OCI-LY7 (cell line): ENCODE measurements at regions of chr16 and their contacts with region 1.

Region 1: DNA sequence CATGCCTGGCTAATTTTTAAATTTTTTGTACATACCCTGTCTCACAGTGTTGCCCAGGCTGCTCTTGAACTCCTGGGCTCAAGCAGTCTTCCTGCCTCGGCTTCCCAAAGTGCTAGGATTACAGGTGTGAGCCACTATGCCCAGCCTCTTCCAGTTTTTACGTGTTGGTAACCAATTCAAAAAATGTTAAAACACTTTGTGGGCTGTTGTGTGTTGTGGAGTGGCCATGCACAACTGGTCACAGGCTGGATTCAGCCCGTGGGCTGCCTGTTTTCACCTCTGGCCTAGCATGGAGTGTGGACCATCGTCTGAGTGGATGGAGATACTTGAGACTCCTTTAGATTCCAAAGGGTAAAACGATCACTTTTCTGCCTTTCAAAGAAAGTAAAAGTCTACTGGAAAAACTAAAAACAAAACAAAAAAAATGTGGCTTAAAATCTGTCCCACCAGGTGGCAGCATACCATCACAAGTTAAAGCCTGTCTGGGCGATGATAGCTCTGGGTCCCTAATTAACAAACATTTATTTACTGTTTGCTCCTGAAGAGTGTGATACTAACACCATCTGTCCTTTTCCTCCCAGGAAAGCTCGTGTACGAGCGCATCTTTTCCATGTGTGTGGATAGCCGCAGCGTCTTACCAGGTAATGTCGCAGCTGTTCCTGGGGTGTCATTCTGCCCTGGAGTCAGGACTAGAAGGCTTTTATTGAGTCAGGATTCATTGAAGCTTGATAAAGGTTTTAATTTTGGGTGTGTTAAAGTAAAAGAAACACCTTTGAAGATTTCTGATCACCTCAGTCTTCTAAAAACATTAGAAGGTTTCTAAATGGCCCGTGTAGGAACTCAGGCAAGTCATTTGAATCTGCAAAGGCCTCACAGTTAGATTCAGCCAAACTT is 45.8 kb downstream of the VPS35L start:
- DNase-seq: peak; percentile 24
- H3K4me3 ChIP-seq: no peak overlapping the region
- H3K27ac ChIP-seq: no peak overlapping the region
- H3K4me1 ChIP-seq: no peaks in the 10 kb centered on the region
- CTCF ChIP-seq: peak; percentile 86

Region 2: DNA sequence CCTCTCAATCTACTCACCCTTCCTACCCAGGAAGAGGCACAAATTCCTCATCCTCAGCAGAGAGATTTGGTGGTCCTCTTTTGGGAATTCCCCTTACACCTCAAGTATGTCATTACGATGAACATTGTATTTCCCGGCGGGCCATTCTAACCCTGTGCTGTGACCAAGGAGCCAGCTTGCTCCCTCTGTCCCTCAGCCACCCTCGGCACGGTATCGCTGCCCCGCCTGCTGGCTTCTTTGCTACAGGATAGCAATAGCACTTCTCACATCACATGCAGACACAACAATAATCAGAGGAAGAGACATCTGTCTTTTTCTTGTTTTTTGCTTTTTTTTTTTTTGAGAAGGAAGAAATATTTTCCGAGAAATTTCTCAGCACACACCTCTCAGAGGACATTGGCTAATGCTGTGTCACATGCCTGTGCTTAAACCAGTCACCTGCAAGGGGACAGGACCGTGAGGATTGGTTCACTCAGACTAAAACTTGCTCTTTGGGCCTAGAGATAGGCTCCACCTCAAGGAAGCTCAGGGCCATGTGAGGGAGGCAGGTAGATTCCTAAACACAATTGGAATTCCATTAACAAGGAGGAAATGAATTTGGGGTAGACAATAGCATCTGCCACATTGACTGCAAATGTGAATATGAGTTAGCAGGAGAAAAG is 142.5 kb before region 1 on chr16:
- CTCF ChIA-PET with region 1: no interaction called
- POLR2A ChIA-PET with region 1: no interaction called
- intact Hi-C with region 1: no loop called
- DNase-seq: no peak
- H3K4me3 ChIP-seq: no peak overlapping the region
- H3K27ac ChIP-seq: no peak overlapping the region
- H3K4me1 ChIP-seq: no peaks in the 10 kb centered on the region
- CTCF ChIP-seq: no peak

Region 3: GRCh38 chr16:19574615-19575014 is 26.7 kb before region 1 on chr16:
- CTCF ChIA-PET with region 1: no interaction called
- POLR2A ChIA-PET with region 1: no interaction called
- intact Hi-C with region 1: no loop called
- DNase-seq: no peak
- H3K4me3 ChIP-seq: no peak overlapping the region
- H3K27ac ChIP-seq: no peak overlapping the region
- H3K4me1 ChIP-seq: no peaks in the 10 kb centered on the region
- CTCF ChIP-seq: no peak

Region 4: DNA sequence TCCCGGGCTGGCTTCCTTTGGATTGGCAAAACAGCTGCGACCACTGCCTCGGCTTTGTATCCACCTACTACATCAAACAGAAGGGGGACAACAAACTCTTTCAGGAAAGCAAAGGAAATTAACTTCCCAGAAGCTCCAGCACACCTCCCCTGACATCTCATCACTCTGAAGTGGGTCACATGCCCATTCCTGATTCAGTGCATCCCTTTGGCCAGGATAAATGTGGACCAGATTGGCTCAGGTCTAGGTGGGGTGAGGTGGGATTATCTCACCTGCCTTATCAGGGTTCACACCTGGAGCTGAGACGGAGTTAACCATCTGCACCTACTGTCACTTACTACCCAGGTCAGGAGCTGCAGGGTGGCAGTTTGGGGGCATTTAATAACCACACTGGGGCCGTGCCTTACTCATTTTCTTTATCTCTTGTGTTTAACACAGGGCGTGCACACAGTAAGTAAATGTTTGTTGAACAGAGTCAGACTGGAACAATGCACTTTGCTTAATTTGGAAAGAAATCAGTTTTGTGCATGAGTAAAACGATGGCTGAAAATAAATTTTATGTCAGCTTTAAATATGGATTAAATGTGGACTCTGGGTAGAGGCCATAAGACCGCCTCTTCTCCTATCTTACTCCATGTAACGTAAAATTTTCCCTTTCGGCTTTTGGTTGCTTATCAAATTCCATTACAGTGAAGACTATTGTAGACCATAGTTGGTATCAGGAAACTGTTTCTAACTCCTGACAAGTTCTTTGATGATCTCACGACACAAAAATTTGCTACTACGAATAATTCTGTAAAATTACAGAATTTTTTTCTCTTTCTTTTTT is 152.7 kb after region 1 on chr16:
- CTCF ChIA-PET with region 1: no interaction called
- POLR2A ChIA-PET with region 1: no interaction called
- intact Hi-C with region 1: no loop called
- DNase-seq: no peak
- H3K4me3 ChIP-seq: no peak overlapping the region
- H3K27ac ChIP-seq: no peak overlapping the region
- H3K4me1 ChIP-seq: no peaks in the 10 kb centered on the region
- CTCF ChIP-seq: no peak

Region 5: DNA sequence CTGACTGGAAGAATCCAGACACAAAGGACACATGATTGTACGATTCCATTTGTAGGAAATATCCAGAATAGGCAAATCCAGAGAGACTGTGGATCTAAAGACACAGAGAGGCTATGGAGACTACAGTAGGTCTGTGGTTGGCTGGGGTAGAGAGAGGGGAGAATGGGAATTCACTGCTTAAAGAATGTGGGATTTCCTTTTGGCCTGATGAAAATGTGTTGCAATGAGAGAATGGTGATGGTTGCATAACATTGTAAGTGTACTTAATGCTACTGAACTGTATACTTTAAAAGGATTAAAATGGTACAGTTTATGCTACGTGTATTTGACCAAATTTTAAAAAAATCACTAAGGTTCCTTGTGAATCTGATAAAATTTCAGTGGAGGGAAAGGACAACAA is 221.2 kb after region 1 on chr16:
- CTCF ChIA-PET with region 1: no interaction called
- POLR2A ChIA-PET with region 1: no interaction called
- intact Hi-C with region 1: no loop called
- DNase-seq: no peak
- H3K4me3 ChIP-seq: no peak overlapping the region
- H3K27ac ChIP-seq: no peak overlapping the region
- H3K4me1 ChIP-seq: no peaks in the 10 kb centered on the region
- CTCF ChIP-seq: no peak

Region 6: GRCh38 chr16:19886073-19886941 is 285.0 kb after region 1 on chr16:
- CTCF ChIA-PET with region 1: interaction called, 5 read pairs
- POLR2A ChIA-PET with region 1: no interaction called
- intact Hi-C with region 1: loop called (anchors 1 kb)
- DNase-seq: peak; percentile 74
- H3K4me3 ChIP-seq: no peak overlapping the region
- H3K27ac ChIP-seq: no peak overlapping the region
- H3K4me1 ChIP-seq: no peaks in the 10 kb centered on the region
- CTCF ChIP-seq: peak; percentile 94